Astrocyte of the cerebellum (primary cell): ENCODE measurements at regions of chr5 and their contacts with region 1.

Region 1: DNA sequence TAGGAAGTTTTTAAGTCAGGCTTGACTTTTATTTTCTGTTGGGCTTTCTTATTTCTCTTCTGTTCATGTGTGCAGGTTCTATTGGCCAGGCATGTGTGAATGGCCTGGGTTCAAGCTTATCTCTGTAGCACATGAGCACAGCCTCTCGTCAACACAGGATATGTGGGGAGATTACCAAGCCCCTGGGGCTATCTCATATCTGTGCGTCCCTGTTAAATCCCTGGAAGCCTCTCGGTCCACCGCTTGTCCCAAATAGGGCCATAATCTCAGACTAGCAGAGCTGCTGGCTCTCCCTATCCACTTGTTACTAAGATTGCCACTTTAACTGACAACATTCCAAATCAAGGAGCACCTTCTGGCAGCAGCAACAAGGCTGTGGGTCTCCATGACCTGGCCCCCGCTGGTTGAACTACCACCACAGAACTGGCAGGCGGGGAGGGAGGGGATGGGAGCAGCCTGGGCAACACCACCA is 28.4 kb upstream of the EBF1 start:
- DNase-seq: no peak
- H3K4me3 ChIP-seq: no peak overlapping the region
- CTCF ChIP-seq: no peak

Region 2: GRCh38 chr5:158174918-158175851 is 952.9 kb before region 1 on chr5:
- in situ Hi-C with region 1: loop called (anchors 5 kb)
- DNase-seq: peak; percentile 60
- H3K4me3 ChIP-seq: no peak overlapping the region
- CTCF ChIP-seq: peak; percentile 88

Region 3: DNA sequence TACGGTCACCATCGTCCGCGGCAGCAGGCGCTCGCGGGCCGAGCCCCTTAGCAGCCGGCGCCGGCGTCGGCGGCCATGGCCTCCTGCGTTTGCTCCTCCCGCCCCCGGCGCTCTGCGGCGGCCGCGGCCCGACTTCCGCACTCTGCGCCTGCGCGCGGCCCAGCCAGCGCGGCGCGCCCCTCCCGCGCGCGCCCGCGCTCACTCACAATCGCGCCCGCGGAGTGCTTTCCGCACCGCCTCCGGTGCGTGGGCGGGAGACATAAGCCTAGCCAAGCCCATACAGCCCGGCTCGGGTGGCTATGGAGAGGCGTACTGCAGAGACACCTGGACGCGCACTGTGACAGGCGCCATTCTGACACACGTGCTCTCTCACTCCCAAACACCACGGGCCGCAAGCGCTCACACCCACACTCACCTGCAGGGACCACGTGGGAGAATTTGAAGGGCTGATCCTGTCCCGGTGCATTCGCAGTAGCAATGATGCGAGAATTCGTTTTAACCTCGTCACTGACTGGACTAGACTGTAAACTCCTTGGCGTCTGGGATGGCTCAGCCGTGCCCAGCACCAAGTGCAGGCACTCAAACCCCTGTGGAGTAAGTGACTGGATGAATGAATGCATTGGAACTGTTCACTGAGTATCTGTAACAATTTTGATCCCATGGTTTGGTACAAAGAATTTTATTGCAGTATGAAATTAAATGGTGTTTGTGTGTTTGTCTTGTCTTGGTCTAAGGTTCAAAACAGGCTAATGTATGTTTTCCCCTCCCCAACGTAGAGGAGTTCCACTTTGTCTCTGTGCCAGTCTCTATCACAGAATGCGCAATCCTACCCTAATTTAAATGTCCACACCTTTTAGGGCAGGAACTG is 81.6 kb after region 1 on chr5 and contains the start of gene RNF145:
- in situ Hi-C with region 1: no loop called
- DNase-seq: peak; percentile 42
- H3K4me3 ChIP-seq: peak within 1 kb of the TSS; percentile 78
- CTCF ChIP-seq: no peak